Stomach (tissue), 19 donors: ENCODE measurements at regions of chr6 and their contacts with region 1.

Region 1: DNA sequence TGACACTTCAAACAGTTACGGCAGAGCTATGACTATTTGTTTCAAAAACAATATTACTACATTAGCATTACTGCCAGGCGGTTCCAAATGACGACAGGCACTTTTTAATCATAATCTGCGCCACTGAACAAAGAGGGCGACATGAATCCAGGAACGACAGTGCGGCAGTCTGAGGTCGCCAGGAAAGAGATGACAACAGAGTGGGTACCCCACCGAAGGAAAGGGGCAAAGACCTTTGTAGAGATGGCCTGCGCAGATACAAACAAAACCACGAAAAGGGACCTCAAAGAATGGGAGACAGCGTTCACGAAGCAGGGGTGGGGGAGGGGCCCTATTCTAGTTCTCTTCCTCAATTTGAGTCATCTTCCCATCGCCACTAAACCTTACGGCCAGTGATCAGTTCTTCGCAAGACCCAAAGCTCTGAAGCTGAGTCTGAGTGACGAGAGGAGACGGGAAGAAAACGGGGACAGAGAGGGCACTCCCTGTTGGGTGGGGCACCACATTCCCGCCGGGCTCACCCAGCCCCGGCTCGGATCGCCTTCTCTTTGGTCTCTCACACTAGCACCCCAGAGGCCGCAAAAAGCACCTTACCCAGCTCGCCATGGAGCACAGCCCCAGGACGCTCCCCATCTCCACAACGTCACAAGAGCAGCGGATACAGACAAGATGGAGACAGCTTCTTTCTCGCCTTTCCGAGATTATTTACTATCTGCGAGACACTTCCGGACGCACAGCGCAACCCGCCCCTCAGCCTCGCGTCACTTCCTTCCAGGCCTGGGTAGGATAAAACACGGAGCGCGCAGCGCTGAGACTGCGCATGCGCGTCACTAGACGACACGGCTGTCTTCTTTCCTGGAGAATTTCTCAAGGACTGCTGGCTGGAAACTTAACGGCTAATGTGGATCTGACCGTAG is at the start of gene SERINC1:
- DNase-seq: peak; percentile 96 to 99
- H3K4me3 ChIP-seq: peak within 1 kb of the TSS; percentile 66 to 91 (median 76)
- H3K27ac ChIP-seq: peak within 1 kb of the TSS; percentile 93 to 96 (median 94)
- H3K4me1 ChIP-seq: peaks cover 21 to 55% (median 39%) of the 10 kb centered on the region in 4 donors
- H3K27me3 ChIP-seq: no peaks in the 10 kb centered on the region
- CTCF ChIP-seq: no peak
- EP300 ChIP-seq: no peak
- POLR2A ChIP-seq: peak in 2 of 4 donors; percentile 58 to 76
- total RNA-seq, gene SERINC1: 30.1 to 328 (median 82.3) TPM

Region 2: GRCh38 chr6:122399384-122400158 is 71.8 kb before region 1 on chr6 and contains the start of gene HSF2:
- intact Hi-C with region 1: loop called (anchors 10 kb)
- DNase-seq: peak; percentile 96 to 99
- H3K4me3 ChIP-seq: peak within 1 kb of the TSS; percentile 81 to 98 (median 93)
- H3K27ac ChIP-seq: peak within 1 kb of the TSS; percentile 84 to 93 (median 90)
- H3K4me1 ChIP-seq: peaks cover 12 to 39% (median 21%) of the 10 kb centered on the region in 4 donors
- H3K27me3 ChIP-seq: no peaks in the 10 kb centered on the region
- CTCF ChIP-seq: peak in 3 of 7 experiments; percentile 21 to 51 (median 23)
- EP300 ChIP-seq: no peak
- POLR2A ChIP-seq: no peak
- total RNA-seq, gene HSF2: 3.2 to 45.1 (median 20.4) TPM